GM18951 (cell line): ENCODE measurements at regions of chr6 and their contacts with region 1.

Region 1: DNA sequence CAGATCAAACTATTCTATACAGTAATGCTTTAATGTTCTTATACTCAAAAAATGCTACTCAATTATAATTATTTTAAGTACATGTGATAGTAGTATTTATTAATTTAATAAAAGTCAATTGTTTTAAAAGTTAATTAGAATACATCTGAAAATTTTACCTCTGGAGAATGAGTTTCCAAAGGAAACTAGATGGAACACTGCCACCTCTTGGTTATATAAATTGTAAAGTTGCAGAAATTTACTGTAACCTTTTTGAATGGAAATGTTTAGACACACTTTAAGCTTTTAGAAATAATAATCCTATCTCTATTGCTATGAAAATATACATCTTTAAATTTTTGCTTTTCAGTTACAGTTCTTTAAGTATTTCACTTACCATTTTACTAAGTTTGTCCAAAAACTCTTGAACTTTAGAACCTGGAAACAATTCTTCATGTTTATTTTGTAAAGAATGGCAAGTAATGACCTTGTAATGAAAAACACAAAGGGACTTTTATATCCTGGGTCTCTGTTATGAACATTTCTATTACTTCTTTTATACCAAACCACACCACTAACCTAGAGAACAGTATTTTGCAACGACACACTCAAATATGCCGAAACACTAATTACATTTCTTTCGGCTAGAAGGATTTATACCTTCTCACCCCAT is 10.9 kb upstream of the BMP5 start:
- POLR2A ChIP-seq: no peak

Region 2: DNA sequence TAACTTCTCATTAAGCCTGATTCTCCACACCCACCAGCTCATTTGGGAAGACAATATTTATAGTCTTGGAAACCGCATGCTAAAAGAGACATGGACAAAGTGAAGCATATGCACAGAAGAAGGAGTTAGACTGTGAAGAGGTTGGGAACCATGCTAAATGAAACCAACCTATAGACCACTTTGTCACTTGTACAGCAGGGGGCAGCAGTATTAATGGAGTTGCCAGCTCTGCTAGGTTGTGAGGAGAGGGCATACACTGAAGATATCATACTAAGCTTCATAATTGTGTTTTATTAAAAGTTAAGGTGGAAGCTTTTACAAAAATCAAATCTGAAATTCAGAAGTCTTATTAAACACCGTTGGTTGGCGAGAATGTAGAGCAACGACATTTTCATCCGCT is 269.0 kb before region 1 on chr6:
- in situ Hi-C with region 1: loop called (anchors 10 kb)
- POLR2A ChIP-seq: no peak